Caco-2 (cell line): ENCODE measurements at regions of chr15 and their contacts with region 1.

Region 1: GRCh38 chr15:64865998-64866520 is 24.3 kb downstream of the PLEKHO2 start:
- DNase-seq: no peak
- H3K4me3 ChIP-seq: no peak overlapping the region
- H3K4me3 Mint-ChIP-seq: no peak overlapping the region
- H3K27ac Mint-ChIP-seq: no peak overlapping the region
- H3K4me1 ChIP-seq: no peaks in the 10 kb centered on the region
- H3K4me1 Mint-ChIP-seq: no peaks in the 10 kb centered on the region
- H3K27me3 ChIP-seq: no peaks in the 10 kb centered on the region
- H3K27me3 Mint-ChIP-seq: no peaks in the 10 kb centered on the region
- CTCF ChIP-seq: no peak

Region 2: GRCh38 chr15:64949409-64950221 is 83.6 kb after region 1 on chr15:
- CTCF ChIA-PET with region 1: no interaction called
- POLR2A ChIA-PET with region 1: no interaction called
- intact Hi-C with region 1: loop called (anchors 10 kb)
- DNase-seq: no peak
- H3K4me3 ChIP-seq: no peak overlapping the region
- H3K4me3 Mint-ChIP-seq: no peak overlapping the region
- H3K27ac Mint-ChIP-seq: no peak overlapping the region
- H3K4me1 ChIP-seq: no peaks in the 10 kb centered on the region
- H3K4me1 Mint-ChIP-seq: peaks cover 24% of the 10 kb centered on the region
- H3K27me3 ChIP-seq: no peaks in the 10 kb centered on the region
- H3K27me3 Mint-ChIP-seq: no peaks in the 10 kb centered on the region
- CTCF ChIP-seq: no peak